ENCODE measurements at regions of chr3 and their contacts with region 1.

Region 1: DNA sequence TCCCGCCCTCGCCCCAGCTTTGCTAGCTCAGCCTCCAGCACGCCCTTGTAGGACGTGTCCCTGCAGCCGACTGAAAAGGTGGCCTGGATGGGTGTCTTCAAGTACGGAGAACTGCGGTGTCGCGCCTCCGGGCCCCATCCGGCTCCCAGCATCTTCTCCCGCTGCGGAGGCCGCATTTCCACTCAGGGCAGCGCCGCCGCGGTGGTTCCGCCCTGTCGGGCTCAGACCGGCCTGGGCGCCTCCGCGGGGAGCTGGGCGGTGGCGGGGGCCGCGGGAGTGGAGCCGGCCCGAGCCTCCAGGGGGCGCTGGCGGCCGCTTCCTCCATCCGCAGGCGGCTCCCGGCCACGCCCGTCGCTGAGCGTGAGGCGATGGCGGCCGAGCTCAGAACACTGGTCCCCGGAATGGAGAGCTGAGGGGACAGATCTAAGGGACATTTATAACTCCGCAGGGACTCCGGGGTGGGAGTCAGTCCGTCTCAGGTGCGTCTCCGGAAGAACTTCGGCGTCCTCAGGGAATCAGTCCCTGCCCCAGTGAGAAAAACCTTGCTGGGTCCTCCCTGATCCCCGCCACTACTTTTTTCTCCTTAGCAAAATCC is 13.6 kb upstream of the SMCO1 start:
- DNase-seq: peak; percentile 78
- H3K4me3 Mint-ChIP-seq: peak overlapping the region; percentile 69
- H3K27ac Mint-ChIP-seq: peak overlapping the region; percentile 86
- H3K4me1 Mint-ChIP-seq: peaks cover 15% of the 10 kb centered on the region
- H3K27me3 Mint-ChIP-seq: peaks cover 7% of the 10 kb centered on the region

Region 2: DNA sequence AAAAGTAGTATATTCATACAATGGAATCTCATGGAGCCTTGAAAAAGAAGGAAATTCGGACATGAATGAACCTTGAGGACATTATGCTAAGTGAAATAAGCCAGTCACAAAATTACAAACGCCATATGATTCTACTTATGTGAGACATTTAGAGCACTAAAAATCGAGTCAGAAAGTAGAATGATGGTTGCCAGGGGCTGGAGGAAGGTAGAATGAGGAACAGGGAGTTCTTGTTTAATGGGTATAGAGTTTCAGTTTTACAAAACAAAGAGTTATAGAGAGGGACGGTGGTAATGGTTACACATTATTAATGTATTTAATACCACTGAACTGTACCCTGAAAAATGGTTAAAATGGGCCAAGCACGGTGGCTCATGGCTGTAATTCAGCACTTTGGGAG is 116.0 kb before region 1 on chr3:
- CTCF ChIA-PET with region 1: no interaction called
- POLR2A ChIA-PET with region 1: no interaction called
- DNase-seq: no peak
- H3K4me3 Mint-ChIP-seq: no peak overlapping the region
- H3K27ac Mint-ChIP-seq: no peak overlapping the region
- H3K4me1 Mint-ChIP-seq: peaks cover 24% of the 10 kb centered on the region
- H3K27me3 Mint-ChIP-seq: no peaks in the 10 kb centered on the region

Region 3: GRCh38 chr3:196444500-196444894 is 84.2 kb before region 1 on chr3:
- CTCF ChIA-PET with region 1: no interaction called
- POLR2A ChIA-PET with region 1: no interaction called
- DNase-seq: no peak
- H3K4me3 Mint-ChIP-seq: no peak overlapping the region
- H3K27ac Mint-ChIP-seq: no peak overlapping the region
- H3K4me1 Mint-ChIP-seq: peaks cover 18% of the 10 kb centered on the region
- H3K27me3 Mint-ChIP-seq: no peaks in the 10 kb centered on the region

Region 4: GRCh38 chr3:196502775-196503195 is 26.0 kb before region 1 on chr3:
- CTCF ChIA-PET with region 1: interaction called, 18 read pairs
- POLR2A ChIA-PET with region 1: no interaction called
- DNase-seq: peak; percentile 77
- H3K4me3 Mint-ChIP-seq: peak overlapping the region; percentile 89
- H3K27ac Mint-ChIP-seq: peak overlapping the region; percentile 93
- H3K4me1 Mint-ChIP-seq: peaks cover 32% of the 10 kb centered on the region
- H3K27me3 Mint-ChIP-seq: peaks cover 3% of the 10 kb centered on the region

Region 5: GRCh38 chr3:196554205-196554604 is 25.5 kb after region 1 on chr3:
- CTCF ChIA-PET with region 1: interaction called, 19 read pairs
- POLR2A ChIA-PET with region 1: no interaction called
- DNase-seq: no peak
- H3K4me3 Mint-ChIP-seq: no peak overlapping the region
- H3K27ac Mint-ChIP-seq: no peak overlapping the region
- H3K4me1 Mint-ChIP-seq: peaks cover under 1% of the 10 kb centered on the region
- H3K27me3 Mint-ChIP-seq: no peaks in the 10 kb centered on the region